Sciatic nerve (tissue), 2 donors: ENCODE measurements at regions of chr12 and their contacts with region 1.

Region 1: DNA sequence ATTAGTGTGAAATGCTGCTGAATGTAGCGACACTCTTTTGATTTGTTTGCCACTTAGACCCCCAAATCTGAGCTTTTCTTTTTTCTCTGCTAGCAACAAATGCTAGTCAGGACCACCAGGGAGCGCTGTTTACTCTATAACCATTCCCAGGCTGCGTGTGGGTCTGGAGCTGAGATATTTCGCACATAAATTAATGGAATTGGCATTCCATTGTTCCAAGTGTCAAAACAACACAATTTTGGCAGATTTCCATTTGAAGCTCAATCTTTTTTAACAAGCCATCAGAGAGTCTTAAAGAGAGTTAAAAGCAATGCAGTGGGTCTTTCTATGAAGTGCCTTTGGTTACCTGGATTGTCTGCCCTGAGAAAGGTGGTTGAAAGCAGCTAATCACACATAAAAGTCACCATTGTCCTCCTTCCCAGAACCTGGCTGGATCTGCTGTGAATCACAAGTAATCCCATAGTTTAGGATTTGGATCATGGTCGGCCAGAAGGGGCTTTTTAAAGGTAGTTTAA is 7.4 kb upstream of the TMEM132C start:
- DNase-seq: peak; percentile 65
- ATAC-seq: peak; percentile 60

Region 2: GRCh38 chr12:128394137-128394536 is 134.5 kb after region 1 on chr12:
- intact Hi-C with region 1: loop called (anchors 10 kb)
- DNase-seq: no peak
- ATAC-seq: no peak